ENCODE measurements at regions of chr2 and their contacts with region 1.

Region 1: DNA sequence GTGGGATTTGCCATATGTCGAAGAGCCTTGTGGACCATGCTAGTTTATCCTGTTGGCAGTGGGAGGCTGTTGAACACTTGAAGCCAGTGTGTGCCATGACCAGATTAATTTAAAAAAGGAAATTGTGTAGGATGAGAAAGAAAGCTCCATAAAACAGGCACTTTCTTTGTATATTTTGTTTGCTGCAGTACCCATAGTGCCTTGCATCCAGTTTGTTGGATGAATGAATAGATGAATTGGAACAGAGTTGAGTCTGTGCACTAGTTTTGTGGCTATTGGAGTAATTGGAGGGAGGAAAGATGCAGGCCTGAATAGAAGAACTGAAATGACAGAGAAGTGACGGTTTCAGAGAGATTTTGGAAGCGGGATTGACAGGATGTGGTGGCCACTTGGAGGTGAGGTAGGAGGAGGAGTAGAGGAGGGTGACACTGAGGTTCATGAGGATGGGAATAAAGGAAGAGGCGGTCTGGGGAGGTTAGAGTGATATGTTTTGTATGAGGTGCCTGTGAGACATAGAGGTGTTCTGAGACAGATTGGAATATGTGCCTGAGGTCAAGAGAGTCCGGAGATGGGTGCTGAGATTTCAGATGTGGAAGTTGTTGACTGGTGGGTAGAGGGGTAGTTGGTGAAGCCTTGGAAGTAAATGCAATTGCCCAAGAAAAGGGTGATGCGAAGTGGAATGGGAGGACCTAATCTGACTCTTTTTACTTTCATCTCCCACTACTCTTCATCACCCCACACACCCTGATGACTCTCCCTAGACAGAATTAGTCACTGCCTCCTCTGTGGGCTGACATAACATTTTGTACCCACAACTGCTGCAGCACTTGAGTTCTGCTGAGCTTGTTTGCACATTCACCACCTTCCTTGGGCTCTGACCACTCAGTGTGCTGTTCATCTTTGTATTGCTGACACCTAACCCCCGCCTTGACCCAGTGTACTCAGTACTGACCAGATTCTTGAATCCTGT is 5.1 kb downstream of the DGUOK start:
- DNase-seq: no peak
- H3K4me3 ChIP-seq: no peak overlapping the region
- H3K27ac ChIP-seq: no peak overlapping the region
- H3K4me1 ChIP-seq: peaks cover 0 to 65% (median 34%) of the 10 kb centered on the region in 4 donors
- H3K27me3 ChIP-seq: no peaks in the 10 kb centered on the region
- CTCF ChIP-seq: no peak

Region 2: GRCh38 chr2:73984203-73984921 is 52.5 kb after region 1 on chr2 and contains the start of gene TET3:
- intact Hi-C with region 1: loop called (anchors 5 kb)
- DNase-seq: peak in 1 of 2 donors; percentile 78
- H3K4me3 ChIP-seq: peak within 1 kb of the TSS; percentile 61 to 66
- H3K27ac ChIP-seq: peak within 1 kb of the TSS; percentile 43 to 46
- H3K4me1 ChIP-seq: peaks cover 0 to 65% (median 49%) of the 10 kb centered on the region in 4 donors
- H3K27me3 ChIP-seq: no peaks in the 10 kb centered on the region
- CTCF ChIP-seq: no peak

Measured in tibial artery (tissue), 4 donors.